MCF 10A (cell line): ENCODE measurements at regions of chr2 and their contacts with region 1.

Region 1: GRCh38 chr2:96208143-96209010 is at the start of gene STARD7:
- DNase-seq: peak; percentile 98
- H3K4me3 Mint-ChIP-seq: peak within 1 kb of the TSS; percentile 80
- H3K27ac Mint-ChIP-seq: peak within 1 kb of the TSS; percentile 59
- H3K4me1 Mint-ChIP-seq: peaks cover 35% of the 10 kb centered on the region
- H3K27me3 Mint-ChIP-seq: no peaks in the 10 kb centered on the region
- CTCF ChIP-seq: no peak
- total RNA-seq, gene STARD7: 84.1 and 105 TPM in 2 replicates

Region 2: DNA sequence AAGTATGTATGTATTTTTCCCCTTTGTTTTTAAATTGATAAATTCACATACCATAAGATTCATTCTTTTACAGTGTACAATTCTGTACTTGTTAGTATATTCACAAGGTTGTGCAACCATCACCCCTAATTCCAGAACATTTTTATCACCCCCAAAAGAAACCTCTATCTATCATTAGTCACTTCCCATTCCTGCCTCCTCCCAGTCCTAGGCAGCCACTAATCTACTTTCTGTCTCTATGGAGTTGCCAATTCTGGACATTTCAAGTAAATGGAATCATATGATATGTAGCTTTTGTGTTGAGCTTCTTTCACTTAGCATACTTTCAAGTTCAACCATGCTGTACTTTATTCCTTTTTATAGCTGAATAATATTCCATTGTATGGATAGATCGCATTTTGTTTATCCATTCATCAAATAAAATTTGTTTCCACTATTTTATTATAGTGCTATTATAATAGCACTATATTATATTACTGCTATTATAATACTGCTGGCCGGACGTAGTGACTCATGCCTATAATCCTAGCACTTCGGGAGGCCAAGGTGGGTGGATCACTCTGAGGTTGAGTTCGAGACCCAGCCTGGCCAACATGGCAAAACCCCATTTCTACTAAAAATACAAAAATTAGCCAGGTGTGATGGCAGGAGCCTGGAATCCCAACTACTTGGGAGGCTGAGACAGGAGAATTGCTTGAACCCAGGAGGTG is 10.7 kb before region 1 on chr2:
- CTCF ChIA-PET with region 1: interaction called, 3 read pairs
- POLR2A ChIA-PET with region 1: interaction called, 15 read pairs
- intact Hi-C with region 1: no loop called
- DNase-seq: peak; percentile 10
- H3K4me3 Mint-ChIP-seq: no peak overlapping the region
- H3K27ac Mint-ChIP-seq: no peak overlapping the region
- H3K4me1 Mint-ChIP-seq: peaks cover 9% of the 10 kb centered on the region
- H3K27me3 Mint-ChIP-seq: no peaks in the 10 kb centered on the region
- CTCF ChIP-seq: no peak

Region 3: GRCh38 chr2:96233880-96234316 is 25.5 kb after region 1 on chr2:
- CTCF ChIA-PET with region 1: interaction called, 5 read pairs
- POLR2A ChIA-PET with region 1: interaction called, 14 read pairs
- intact Hi-C with region 1: no loop called
- DNase-seq: no peak
- H3K4me3 Mint-ChIP-seq: no peak overlapping the region
- H3K27ac Mint-ChIP-seq: no peak overlapping the region
- H3K4me1 Mint-ChIP-seq: no peaks in the 10 kb centered on the region
- H3K27me3 Mint-ChIP-seq: no peaks in the 10 kb centered on the region
- CTCF ChIP-seq: no peak

Region 4: DNA sequence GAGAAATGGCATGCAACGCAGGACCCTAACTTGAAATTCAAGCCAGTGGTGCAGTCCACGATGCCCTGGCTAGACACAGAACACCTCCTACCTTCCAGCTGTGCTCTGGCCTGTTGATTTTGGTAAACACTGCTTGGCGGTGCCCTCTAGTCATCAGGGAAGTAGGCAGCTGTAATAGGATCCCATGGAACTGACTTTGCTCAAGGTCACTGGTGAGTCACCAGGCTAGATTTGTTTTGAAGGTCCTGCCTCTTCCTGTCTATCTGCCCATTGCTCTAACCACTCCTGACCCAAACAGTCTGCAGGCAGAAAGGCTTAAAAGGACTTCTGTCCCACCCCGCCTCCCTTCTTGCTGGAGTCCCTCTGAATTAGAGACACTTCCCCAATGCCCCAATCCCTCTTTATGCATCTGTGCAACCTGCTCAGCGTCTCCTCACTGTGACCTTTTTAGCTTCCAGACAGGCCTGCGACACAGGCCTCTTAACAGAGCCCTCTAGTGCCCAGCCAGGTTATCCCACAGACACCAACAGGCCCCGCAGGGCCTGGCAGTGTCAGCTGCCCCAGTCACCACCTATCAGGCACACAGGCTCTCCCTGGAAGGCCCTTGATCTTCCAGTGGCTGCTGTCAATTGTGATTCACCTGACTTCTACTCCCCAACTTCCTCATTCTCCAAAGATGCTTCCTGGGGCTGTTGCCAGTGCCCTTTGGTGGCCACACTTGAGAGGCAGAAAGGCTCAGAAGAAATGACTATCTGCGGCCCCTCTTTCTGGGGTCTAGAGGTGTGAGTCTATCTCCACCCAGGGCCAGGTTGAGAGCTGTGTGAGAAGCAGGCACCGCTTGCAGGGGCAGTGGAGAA is 52.3 kb after region 1 on chr2:
- CTCF ChIA-PET with region 1: interaction called, 7 read pairs
- POLR2A ChIA-PET with region 1: interaction called, 114 read pairs
- intact Hi-C with region 1: loop called (anchors 1 kb)
- DNase-seq: peak; percentile 94
- H3K4me3 Mint-ChIP-seq: peak overlapping the region; percentile 42
- H3K27ac Mint-ChIP-seq: peak overlapping the region; percentile 83
- H3K4me1 Mint-ChIP-seq: peaks cover 34% of the 10 kb centered on the region
- H3K27me3 Mint-ChIP-seq: no peaks in the 10 kb centered on the region
- CTCF ChIP-seq: peak; percentile 45

Region 5: DNA sequence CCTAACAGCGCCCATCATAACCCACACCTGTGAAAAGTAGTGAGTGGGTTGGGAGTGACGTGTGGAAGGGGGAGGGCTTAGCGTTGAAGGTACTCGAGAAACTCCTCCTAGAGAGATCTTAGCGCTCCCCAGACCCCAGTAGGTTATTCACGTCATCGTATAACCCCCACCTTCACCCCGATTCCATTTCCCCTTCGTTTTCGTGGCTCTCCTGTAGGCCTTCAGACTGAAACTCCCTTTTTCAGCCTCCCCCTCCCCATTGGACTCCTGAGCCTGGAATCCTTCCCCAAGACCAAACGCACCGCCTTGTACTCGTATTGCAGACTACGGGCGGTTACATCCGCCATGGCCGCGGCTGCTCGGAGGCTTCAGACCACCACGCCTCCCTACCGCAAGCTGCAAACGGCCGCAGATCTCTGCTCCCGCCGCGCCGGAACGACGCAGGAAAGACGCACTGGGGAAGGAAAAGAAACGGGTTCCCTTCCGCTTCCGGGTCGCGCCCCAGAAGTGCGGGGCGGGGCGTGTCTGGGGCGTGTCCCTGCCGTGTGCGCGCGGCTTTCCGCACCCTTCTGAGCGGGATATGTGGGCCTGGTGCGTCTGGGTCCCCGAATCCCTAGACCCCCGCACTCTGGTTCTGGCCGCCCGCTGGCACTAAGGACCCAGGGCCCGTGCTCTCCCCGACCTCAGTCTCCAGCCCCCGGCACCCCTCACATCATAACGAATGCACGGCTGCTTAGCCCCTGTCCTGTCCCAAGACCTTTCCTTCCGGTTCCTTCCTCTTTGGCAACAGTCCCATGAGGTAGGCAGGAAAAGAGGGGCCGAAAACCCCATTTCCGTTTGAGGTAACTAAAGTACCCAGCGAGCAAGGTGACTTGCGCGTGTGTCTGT is 97.0 kb after region 1 on chr2 and contains the start of gene SNRNP200:
- CTCF ChIA-PET with region 1: no interaction called
- POLR2A ChIA-PET with region 1: interaction called, 11 read pairs
- intact Hi-C with region 1: no loop called
- DNase-seq: peak; percentile 88
- H3K4me3 Mint-ChIP-seq: peak within 1 kb of the TSS; percentile 95
- H3K27ac Mint-ChIP-seq: peak within 1 kb of the TSS; percentile 96
- H3K4me1 Mint-ChIP-seq: peaks cover 25% of the 10 kb centered on the region
- H3K27me3 Mint-ChIP-seq: no peaks in the 10 kb centered on the region
- CTCF ChIP-seq: no peak
- total RNA-seq, gene SNRNP200: 115 and 116 TPM in 2 replicates

Region 6: DNA sequence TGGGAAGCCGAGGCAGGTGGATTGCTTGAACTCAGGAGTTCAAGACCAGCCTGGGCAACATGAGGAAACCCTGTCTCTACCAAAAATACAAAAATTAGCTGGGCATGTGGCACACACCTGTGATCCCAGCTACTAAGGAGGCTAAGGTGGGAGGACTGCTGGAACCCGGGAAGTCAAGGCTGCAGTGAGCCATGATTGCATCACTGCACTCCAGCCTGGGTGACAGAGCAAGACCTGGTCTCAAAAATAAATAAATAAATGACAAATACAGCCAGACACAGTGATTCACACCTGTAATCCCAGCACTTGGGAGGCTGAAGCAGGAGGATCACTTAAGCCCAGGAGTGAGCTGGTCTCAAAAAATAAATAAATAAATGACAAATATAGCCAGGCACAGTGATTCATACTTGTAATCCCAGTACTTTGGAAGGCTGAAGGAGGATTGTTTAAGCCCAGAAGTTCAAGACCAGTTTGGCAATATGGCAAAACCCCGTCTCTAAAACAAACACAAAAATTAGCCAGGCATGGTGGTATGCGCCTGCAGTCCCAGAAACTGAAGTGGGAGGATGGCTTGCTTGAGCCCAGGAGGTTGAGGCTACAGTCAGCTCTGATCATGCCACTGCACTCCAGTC is 423.5 kb after region 1 on chr2:
- CTCF ChIA-PET with region 1: no interaction called
- POLR2A ChIA-PET with region 1: no interaction called
- intact Hi-C with region 1: no loop called
- DNase-seq: peak; percentile 53
- H3K4me3 Mint-ChIP-seq: no peak overlapping the region
- H3K27ac Mint-ChIP-seq: no peak overlapping the region
- H3K4me1 Mint-ChIP-seq: peaks cover 19% of the 10 kb centered on the region
- H3K27me3 Mint-ChIP-seq: no peaks in the 10 kb centered on the region
- CTCF ChIP-seq: no peak